ENCODE measurements at regions of chr2 and their contacts with region 1.

Region 1: GRCh38 chr2:28643911-28644334 is 107.7 kb upstream of the PPP1CB start:
- DNase-seq: no peak
- H3K4me3 Mint-ChIP-seq: no peak overlapping the region
- H3K27ac Mint-ChIP-seq: no peak overlapping the region
- H3K4me1 Mint-ChIP-seq: peaks cover 26% of the 10 kb centered on the region
- H3K27me3 Mint-ChIP-seq: no peaks in the 10 kb centered on the region

Region 2: GRCh38 chr2:28656937-28657615 is 13.2 kb after region 1 on chr2:
- intact Hi-C with region 1: loop called (anchors 2 kb)
- DNase-seq: no peak
- H3K4me3 Mint-ChIP-seq: no peak overlapping the region
- H3K27ac Mint-ChIP-seq: peak overlapping the region; percentile 57
- H3K4me1 Mint-ChIP-seq: peaks cover 54% of the 10 kb centered on the region
- H3K27me3 Mint-ChIP-seq: peaks cover 6% of the 10 kb centered on the region

Region 3: GRCh38 chr2:28668106-28668804 is 24.3 kb after region 1 on chr2:
- intact Hi-C with region 1: no loop called
- DNase-seq: no peak
- H3K4me3 Mint-ChIP-seq: no peak overlapping the region
- H3K27ac Mint-ChIP-seq: no peak overlapping the region
- H3K4me1 Mint-ChIP-seq: peaks cover 5% of the 10 kb centered on the region
- H3K27me3 Mint-ChIP-seq: peaks cover 9% of the 10 kb centered on the region

Region 4: GRCh38 chr2:29066271-29066860 is 422.4 kb after region 1 on chr2:
- intact Hi-C with region 1: no loop called
- DNase-seq: no peak
- H3K4me3 Mint-ChIP-seq: no peak overlapping the region
- H3K27ac Mint-ChIP-seq: no peak overlapping the region
- H3K4me1 Mint-ChIP-seq: peaks cover 5% of the 10 kb centered on the region
- H3K27me3 Mint-ChIP-seq: no peaks in the 10 kb centered on the region

Measured in activated T-helper 1 cell treated with anti-CD3 and anti-CD28 coated beads, Interleukin-12 subunit alpha, Interleukin-12 subunit beta, Interleukin-2, Interleukin-4 antibody, amounts not matched to agents 30 ng/mL and 10 ng/mL and 1 ng/mL, durations not matched to agents 14 hours and 24 hours and 36 hours (primary cell).